Activated CD4-positive, alpha-beta memory T cell treated with anti-CD3 and anti-CD28 coated beads for 36 hours (primary cell): ENCODE measurements at regions of chr16 and their contacts with region 1.

Region 1: DNA sequence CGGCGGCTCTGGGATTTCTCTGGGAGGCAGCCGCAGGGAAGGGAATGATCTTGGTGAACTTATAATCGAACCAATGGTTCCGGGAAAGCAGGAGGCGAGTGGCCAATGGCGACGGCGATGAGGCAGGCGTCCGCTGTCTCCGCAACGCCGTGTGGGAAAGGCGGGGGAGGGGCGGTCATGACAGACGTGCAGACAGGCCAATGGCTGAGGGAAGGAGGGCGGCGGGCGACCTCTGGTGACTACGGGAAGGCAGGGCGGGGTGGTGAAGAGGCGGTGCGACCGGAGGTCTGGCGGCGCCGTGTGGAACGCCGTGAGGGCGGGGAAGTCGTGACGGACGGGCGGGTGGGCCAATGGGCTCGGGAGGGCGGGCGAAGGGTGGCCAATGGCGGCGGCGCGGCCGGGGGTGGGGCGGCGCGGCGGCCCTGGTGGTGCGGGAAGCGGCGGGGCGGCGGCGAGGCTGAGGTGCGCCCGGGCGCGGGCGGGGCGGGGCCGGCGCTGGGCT is at the start of gene RAB40C:
- DNase-seq: peak; percentile 99
- H3K4me3 Mint-ChIP-seq: peak within 1 kb of the TSS; percentile 83
- H3K27ac Mint-ChIP-seq: peak within 1 kb of the TSS; percentile 96
- H3K4me1 Mint-ChIP-seq: peaks cover 27% of the 10 kb centered on the region
- H3K27me3 Mint-ChIP-seq: no peaks in the 10 kb centered on the region
- total RNA-seq, gene RAB40C: 10.1 to 10.6 TPM

Region 2: DNA sequence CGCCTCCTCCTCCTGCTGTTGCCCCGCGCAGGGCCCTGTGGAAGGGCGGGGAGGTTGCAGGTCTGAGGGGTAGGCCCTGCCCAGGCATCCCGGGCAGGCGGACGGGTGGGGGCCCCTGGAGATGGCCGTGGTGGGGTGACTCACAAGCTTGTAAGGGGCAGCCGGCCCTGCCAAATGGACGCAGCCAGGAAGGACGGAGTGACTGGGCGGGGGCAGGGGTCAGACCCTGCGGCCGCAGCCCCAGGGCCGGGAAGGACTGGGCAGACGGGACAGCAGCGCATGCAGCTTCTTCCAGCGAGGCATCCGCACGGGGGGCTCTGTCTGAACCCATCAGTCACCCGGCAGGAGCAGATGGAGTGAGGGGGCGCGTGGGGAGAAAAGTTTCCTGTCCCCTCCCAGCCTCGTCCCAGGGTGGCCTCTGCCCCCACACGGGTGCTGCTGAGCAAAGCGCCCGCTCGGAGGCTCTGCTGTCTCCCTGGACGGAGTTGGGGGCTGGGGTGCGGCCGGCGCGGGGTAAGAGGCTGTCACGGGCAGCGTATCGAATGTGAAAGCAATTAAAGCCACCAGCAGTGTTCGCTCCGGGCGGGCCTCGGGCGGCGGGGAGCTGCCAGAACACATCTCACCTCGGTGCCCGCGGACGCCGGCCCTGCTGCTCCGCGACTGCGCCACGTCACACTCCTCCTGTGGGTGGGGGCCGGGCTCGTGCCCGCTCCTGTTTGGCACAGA is 34.9 kb before region 1 on chr16:
- CTCF ChIA-PET with region 1: no interaction called
- POLR2A ChIA-PET with region 1: no interaction called
- intact Hi-C with region 1: no loop called
- DNase-seq: no peak
- H3K4me3 Mint-ChIP-seq: no peak overlapping the region
- H3K27ac Mint-ChIP-seq: no peak overlapping the region
- H3K4me1 Mint-ChIP-seq: no peaks in the 10 kb centered on the region
- H3K27me3 Mint-ChIP-seq: peaks cover 4% of the 10 kb centered on the region

Region 3: GRCh38 chr16:569445-570254 is 20.1 kb before region 1 on chr16 and contains the start of gene PIGQ:
- CTCF ChIA-PET with region 1: no interaction called
- POLR2A ChIA-PET with region 1: interaction called, 3 read pairs
- intact Hi-C with region 1: loop called (anchors 2 kb)
- DNase-seq: peak; percentile 76
- H3K4me3 Mint-ChIP-seq: peak within 1 kb of the TSS; percentile 79
- H3K27ac Mint-ChIP-seq: peak within 1 kb of the TSS; percentile 88
- H3K4me1 Mint-ChIP-seq: peaks cover 33% of the 10 kb centered on the region
- H3K27me3 Mint-ChIP-seq: no peaks in the 10 kb centered on the region
- total RNA-seq, gene PIGQ: 24.2 to 26.2 TPM

Region 4: DNA sequence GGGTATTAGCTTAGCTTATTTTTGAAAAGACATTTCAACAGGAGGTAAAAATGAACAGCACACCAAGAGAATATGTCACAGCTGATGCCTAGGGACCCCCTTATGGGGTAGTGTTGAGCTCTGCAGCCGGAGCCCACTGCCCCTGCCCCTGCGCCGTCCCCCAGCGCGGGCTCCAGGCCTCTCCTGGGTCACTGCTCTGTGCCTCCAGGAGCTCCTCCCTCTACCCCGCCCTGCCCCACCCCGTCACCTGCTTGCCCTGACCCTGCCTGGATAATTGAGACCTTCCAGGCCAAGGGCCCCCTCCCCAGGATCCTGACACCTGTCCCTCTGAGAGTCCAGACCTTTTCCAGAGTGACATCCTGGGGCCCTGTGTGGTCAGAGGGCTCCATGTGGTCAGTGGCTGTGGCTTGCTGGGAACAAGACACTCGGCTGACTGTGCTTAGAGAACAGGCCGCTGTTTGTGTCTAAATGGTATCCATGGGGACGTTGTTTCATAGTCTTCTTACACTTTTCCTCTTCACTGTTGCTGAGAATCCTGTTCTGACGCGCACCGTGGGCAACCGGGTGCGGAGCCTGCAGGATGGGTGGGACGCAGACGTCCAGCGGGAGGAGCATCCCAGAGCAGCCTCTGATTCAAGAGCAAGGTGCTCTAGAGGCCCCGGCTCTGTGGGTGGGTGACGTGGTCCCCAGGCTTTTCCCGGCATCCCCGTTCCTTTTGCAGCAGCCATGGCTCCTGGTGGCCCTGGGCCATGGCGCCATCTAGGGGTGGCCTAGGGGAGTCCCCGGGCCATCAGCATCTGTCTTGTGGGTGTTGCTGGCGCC is 21.0 kb after region 1 on chr16:
- CTCF ChIA-PET with region 1: no interaction called
- POLR2A ChIA-PET with region 1: no interaction called
- intact Hi-C with region 1: loop called (anchors 1 kb)
- DNase-seq: peak; percentile 76
- H3K4me3 Mint-ChIP-seq: no peak overlapping the region
- H3K27ac Mint-ChIP-seq: no peak overlapping the region
- H3K4me1 Mint-ChIP-seq: peaks cover 14% of the 10 kb centered on the region
- H3K27me3 Mint-ChIP-seq: no peaks in the 10 kb centered on the region

Region 5: DNA sequence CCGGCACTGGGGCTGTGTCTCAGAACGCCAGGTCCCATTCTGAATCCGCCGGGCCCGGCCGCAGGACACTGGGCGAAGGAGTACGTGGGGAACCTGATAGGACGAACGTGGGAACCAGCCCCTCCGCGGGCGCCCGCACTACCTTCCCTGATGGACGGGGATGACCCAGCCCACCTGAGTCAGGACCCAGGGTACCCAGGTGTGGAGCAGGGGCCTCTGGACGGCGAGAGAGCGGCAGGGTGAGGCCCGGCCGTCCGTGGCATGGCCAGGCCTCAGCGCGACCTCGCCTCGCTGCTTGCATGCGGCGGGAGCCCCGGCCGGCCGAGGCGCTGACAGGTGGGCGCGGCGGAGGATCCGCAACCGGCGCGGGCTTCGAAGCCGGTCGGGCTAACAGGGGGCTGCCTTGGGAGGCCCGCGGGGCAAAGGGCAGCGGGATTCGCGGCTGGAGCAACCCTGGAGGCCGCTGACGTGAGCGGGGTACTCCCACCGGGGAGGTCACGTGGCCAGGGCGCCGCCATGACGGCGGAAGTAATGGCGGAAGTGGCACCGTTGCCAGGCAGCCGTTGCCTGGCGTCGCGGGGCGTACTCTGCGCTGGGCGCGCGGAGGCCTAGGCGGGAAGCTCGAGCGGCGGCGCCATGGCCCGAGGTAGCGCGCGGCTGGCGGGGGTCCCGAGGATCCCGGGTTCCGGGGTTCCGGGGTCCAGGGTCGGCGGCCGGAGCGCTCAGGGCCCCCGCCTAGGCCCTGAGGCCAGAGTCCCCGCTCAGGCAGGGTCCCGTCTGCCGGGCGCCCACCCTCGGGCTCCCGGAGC is 59.3 kb after region 1 on chr16 and contains the start of gene WDR90:
- CTCF ChIA-PET with region 1: no interaction called
- POLR2A ChIA-PET with region 1: interaction called, 3 read pairs
- intact Hi-C with region 1: loop called (anchors 1 kb)
- DNase-seq: peak; percentile 95
- H3K4me3 Mint-ChIP-seq: peak within 1 kb of the TSS; percentile 79
- H3K27ac Mint-ChIP-seq: peak within 1 kb of the TSS; percentile 56
- H3K4me1 Mint-ChIP-seq: peaks cover 16% of the 10 kb centered on the region
- H3K27me3 Mint-ChIP-seq: no peaks in the 10 kb centered on the region
- total RNA-seq, gene WDR90: 52.8 to 58.2 TPM

Region 6: DNA sequence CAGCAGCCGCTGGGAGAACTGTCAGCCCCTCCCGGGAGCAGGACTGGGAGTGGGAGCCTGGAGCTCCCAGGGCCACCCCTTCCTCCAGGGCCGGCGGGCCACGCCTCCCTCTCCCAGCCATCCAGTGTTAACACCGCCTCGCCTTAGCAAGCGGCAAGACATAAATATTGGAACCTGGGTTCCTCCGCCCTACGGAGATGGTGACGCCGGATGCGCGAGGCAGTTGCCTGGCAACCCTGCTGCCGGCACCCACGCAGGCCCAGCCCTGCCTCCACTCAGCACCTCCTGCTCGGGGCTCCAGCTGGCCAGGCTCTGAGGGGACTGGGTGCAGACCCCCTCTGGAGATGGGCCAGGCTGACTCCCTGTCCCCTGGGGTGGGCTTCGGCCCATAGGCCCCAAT is 535.8 kb after region 1 on chr16:
- CTCF ChIA-PET with region 1: no interaction called
- POLR2A ChIA-PET with region 1: no interaction called
- intact Hi-C with region 1: no loop called
- DNase-seq: peak; percentile 46
- H3K4me3 Mint-ChIP-seq: no peak overlapping the region
- H3K27ac Mint-ChIP-seq: no peak overlapping the region
- H3K4me1 Mint-ChIP-seq: no peaks in the 10 kb centered on the region
- H3K27me3 Mint-ChIP-seq: no peaks in the 10 kb centered on the region